MCF 10A (cell line): ENCODE measurements at regions of chr16 and their contacts with region 1.

Region 1: DNA sequence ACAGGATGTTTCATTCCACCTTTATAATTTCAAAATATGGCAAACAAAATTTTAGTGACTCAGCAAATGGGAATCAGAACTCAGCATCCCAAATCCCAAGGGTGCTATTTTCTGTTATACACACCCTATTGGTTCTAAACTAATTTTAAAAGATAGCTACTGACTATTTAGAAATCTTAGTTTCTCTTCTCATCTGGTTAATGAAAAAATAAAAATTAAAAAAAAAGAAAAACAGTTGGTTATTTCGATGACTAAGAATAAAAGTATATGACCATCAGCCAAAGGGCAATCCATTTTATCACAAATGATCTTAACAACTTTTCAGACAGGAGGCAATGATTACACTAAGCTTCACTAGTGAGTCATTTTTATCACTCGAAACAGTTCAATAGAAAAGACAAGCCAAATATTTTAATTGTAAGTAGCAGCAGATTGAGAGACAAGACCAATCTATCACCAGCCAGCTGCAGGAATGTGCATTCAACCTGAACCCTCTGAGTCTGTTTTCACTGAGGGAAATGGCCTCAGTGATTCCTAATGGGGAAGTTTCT is 15.2 kb downstream of the PHLPP2 start:
- DNase-seq: peak; percentile 53
- H3K4me3 Mint-ChIP-seq: peak overlapping the region; percentile 58
- H3K27ac Mint-ChIP-seq: peak overlapping the region; percentile 75
- H3K4me1 Mint-ChIP-seq: peaks cover 26% of the 10 kb centered on the region
- H3K27me3 Mint-ChIP-seq: no peaks in the 10 kb centered on the region
- CTCF ChIP-seq: no peak

Region 2: DNA sequence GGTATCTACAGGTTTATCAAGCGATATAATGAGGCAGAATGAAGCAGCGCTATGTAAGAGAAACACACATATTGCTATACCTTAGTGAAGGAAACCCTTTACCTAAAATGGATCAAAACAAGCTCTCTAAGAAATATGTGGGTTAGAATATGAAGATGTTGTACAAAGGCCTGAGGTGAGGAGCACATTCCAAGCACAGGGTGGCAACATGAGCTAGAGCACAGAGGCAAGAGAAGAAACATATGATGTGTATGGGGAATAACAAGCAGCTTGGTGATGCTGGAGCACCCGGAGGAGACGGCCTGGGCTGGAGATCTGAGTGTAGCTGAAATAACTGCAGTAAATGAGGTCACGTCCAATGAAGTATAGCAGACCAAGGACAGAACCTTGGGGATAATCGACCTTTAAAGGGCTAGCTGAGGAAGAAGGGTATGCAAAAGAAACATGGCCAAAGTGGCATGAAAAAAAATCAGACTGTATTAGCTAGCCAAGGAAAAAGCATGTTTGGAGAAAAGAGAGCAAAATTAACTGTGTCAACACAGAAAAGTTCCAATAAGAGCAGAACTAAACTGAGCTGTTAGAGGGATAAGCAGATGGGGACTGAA is 39.3 kb before region 1 on chr16:
- CTCF ChIA-PET with region 1: no interaction called
- POLR2A ChIA-PET with region 1: no interaction called
- intact Hi-C with region 1: no loop called
- DNase-seq: no peak
- H3K4me3 Mint-ChIP-seq: no peak overlapping the region
- H3K27ac Mint-ChIP-seq: no peak overlapping the region
- H3K4me1 Mint-ChIP-seq: no peaks in the 10 kb centered on the region
- H3K27me3 Mint-ChIP-seq: no peaks in the 10 kb centered on the region
- CTCF ChIP-seq: no peak

Region 3: GRCh38 chr16:71723537-71724319 is 14.4 kb after region 1 on chr16:
- CTCF ChIA-PET with region 1: interaction called, 3 read pairs
- POLR2A ChIA-PET with region 1: interaction called, 47 read pairs
- intact Hi-C with region 1: no loop called
- DNase-seq: peak; percentile 56
- H3K4me3 Mint-ChIP-seq: peak overlapping the region; percentile 96
- H3K27ac Mint-ChIP-seq: no peak overlapping the region
- H3K4me1 Mint-ChIP-seq: peaks cover 5% of the 10 kb centered on the region
- H3K27me3 Mint-ChIP-seq: no peaks in the 10 kb centered on the region
- CTCF ChIP-seq: no peak